Transverse colon (tissue), 4 donors: ENCODE measurements at regions of chr10 and their contacts with region 1.

Region 1: GRCh38 chr10:75143353-75143752 is 31.9 kb downstream of the SAMD8 start:
- DNase-seq: no peak
- H3K4me3 ChIP-seq: no peak overlapping the region
- H3K27ac ChIP-seq: no peak overlapping the region
- H3K4me1 ChIP-seq: peaks cover 0 to 23% (median 7%) of the 10 kb centered on the region in 4 donors
- H3K27me3 ChIP-seq: no peaks in the 10 kb centered on the region
- CTCF ChIP-seq: no peak
- EP300 ChIP-seq: no peak
- POLR2A ChIP-seq: no peak

Region 2: DNA sequence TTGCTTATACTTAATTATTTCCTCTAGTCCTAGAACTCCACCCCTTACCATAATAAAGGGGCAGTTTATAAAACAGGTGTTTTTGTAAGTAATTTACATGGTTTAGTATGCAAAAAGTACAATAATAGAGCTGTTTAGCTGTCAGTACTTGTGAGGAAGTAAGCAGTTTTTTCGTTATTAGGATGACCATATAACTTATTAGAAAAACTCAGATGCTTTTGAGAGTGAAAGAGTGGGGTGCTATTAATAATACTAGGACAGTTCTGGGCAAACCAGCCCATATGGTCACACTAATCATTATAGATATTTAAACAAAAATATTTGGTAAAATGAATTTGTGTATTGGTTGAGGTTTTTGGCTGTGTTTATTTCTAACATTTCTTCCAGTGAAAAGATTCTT is 518.9 kb before region 1 on chr10:
- in situ Hi-C with region 1: no loop called
- intact Hi-C with region 1: loop called (anchors 5 kb)
- DNase-seq: no peak
- H3K4me3 ChIP-seq: no peak overlapping the region
- H3K27ac ChIP-seq: no peak overlapping the region
- H3K4me1 ChIP-seq: no peaks in the 10 kb centered on the region
- H3K27me3 ChIP-seq: no peaks in the 10 kb centered on the region
- CTCF ChIP-seq: no peak
- EP300 ChIP-seq: no peak
- POLR2A ChIP-seq: no peak